Common myeloid progenitor, CD34-positive (primary cell): ENCODE measurements at regions of chrX and their contacts with region 1.

Region 1: GRCh38 chrX:9988762-9989161 is 21.6 kb downstream of the CLDN34 start:
- DNase-seq: peak in 2 of 3 donors; percentile 38 to 55
- H3K4me3 ChIP-seq: no peak overlapping the region
- H3K27ac ChIP-seq: no peak overlapping the region
- H3K4me1 ChIP-seq: peaks cover 0 to 4% (median under 1%) of the 10 kb centered on the region in 4 experiments
- H3K27me3 ChIP-seq: no peaks in the 10 kb centered on the region

Region 2: DNA sequence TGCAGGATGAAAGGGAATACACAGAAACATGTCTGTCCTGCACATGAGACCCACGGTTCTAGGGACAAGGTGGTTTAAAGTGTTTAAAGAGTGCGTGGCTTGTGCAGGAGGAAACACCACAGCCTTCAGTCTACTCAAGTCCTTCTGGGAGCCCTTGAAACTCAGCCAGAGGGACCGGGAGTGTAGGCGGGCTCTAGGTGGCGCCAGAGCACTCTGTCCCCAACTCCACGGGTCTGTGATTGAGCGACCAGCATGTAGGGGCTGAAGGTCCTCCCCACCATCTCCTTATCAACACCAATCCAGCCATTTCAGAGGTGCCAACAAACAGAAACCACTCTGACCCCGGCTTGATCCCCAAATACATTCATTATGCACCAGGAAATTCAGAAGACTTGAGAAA is 103.6 kb before region 1 on chrX:
- CTCF ChIA-PET with region 1: interaction called, 11 read pairs
- POLR2A ChIA-PET with region 1: no interaction called
- DNase-seq: peak; percentile 60 to 75 (median 69)
- H3K4me3 ChIP-seq: no peak overlapping the region
- H3K27ac ChIP-seq: no peak overlapping the region
- H3K4me1 ChIP-seq: peaks cover 2 to 10% (median 3%) of the 10 kb centered on the region in 4 experiments
- H3K27me3 ChIP-seq: peaks cover 0 to 7% (median 0%) of the 10 kb centered on the region in 5 experiments

Region 3: DNA sequence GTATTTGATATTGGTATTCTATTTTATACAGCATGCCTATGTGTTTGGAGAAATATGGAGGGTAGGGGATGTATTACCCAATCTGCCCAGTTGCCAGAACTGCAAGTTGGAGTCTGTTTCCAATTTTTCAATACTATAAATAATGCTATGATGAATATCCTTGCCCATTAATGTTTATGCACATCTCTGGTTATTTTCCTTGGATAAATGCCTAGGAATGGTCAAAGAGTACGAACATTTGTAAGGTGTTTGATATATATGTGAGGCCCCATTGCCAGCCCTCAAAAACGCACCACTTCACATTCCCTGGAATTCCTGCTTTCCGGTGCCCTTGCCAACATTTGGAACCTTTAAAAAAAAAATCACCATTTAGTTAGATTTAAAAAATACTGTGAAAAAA is 12.7 kb after region 1 on chrX:
- CTCF ChIA-PET with region 1: interaction called, 10 read pairs
- POLR2A ChIA-PET with region 1: no interaction called
- DNase-seq: no peak
- H3K4me3 ChIP-seq: no peak overlapping the region
- H3K27ac ChIP-seq: no peak overlapping the region
- H3K4me1 ChIP-seq: peaks cover 0 to 11% (median 3%) of the 10 kb centered on the region in 4 experiments
- H3K27me3 ChIP-seq: no peaks in the 10 kb centered on the region